ENCODE measurements at regions of chr20 and their contacts with region 1.

Region 1: DNA sequence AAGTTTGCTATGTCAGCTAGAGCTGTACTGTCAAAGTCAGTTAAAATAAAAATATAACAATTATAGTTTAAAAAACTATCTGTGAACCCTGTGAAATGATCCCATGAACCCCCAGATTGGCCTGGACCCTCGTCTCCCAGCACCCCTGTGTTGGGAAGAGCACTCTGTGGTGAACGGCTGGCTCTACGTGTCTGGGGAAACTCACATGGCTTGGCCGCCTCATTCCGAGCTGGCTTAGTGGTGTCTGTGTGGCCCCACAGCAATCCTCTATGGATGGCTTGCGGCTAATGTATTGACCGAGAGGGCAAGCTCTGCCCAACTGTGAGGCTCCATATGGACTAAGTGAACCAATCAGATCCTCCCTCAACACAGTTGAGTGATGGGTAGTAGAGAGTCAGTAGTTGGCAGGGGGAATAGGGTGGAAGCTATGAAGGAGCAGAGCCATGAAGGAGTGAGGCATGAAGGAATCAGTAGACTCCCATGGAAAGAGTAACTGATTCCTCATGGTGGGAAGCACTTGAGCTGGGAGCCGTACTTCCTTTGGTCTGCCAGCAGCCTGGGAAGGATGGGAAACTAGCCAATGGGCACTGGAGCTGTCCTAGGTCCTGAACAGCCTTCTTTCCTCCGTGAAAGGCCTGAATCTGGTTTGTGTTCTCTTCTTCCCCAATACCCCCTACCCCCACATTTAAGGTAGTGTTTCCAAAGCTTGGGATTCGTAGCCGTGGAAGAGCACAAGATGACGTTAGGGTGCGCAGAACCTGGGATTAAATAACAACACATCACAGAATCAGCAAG is 21.6 kb upstream of the ZNF831 start:
- DNase-seq: peak in 2 of 14 experiments; percentile 25 to 33
- ATAC-seq: no peak
- H3K4me3 ChIP-seq: no peak overlapping the region
- H3K4me3 Mint-ChIP-seq: peak overlapping the region; percentile 7
- H3K27ac ChIP-seq: no peak overlapping the region
- H3K27ac Mint-ChIP-seq: no peak overlapping the region
- H3K4me1 ChIP-seq: peaks cover 38% of the 10 kb centered on the region
- H3K4me1 Mint-ChIP-seq: peaks cover 58% of the 10 kb centered on the region
- H3K27me3 ChIP-seq: no peaks in the 10 kb centered on the region
- H3K27me3 Mint-ChIP-seq: no peaks in the 10 kb centered on the region
- CTCF ChIP-seq: no peak

Region 2: GRCh38 chr20:59094576-59094975 is 47.4 kb before region 1 on chr20:
- CTCF ChIA-PET with region 1: no interaction called
- POLR2A ChIA-PET with region 1: interaction called, 3 read pairs
- intact Hi-C with region 1: loop called in 1 of 2 experiments (anchors 5 kb)
- DNase-seq: no peak
- ATAC-seq: no peak
- H3K4me3 ChIP-seq: no peak overlapping the region
- H3K4me3 Mint-ChIP-seq: no peak overlapping the region
- H3K27ac ChIP-seq: no peak overlapping the region
- H3K27ac Mint-ChIP-seq: no peak overlapping the region
- H3K4me1 ChIP-seq: no peaks in the 10 kb centered on the region
- H3K4me1 Mint-ChIP-seq: no peaks in the 10 kb centered on the region
- H3K27me3 ChIP-seq: no peaks in the 10 kb centered on the region
- H3K27me3 Mint-ChIP-seq: no peaks in the 10 kb centered on the region
- CTCF ChIP-seq: no peak

Region 3: DNA sequence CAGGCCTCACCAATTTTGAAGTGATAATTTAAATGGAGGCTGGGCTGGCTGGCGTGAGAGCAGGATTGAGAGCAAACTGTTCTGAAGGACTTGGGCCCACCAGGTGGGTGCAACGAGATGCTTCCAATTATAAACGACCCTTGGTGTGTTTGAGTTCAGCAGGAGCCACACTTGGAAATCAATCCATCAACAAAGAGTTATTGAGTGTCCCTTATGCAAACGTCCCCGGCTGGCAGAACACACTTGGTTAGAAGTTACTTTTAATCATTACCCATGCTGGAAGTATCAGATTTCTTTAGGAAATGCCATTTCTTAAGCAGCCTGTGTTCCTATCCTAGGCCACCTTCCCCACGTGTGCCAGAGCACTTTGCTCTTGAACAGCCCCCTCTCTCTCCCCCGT is 16.1 kb before region 1 on chr20:
- CTCF ChIA-PET with region 1: interaction called, 13 read pairs
- POLR2A ChIA-PET with region 1: interaction called, 203 read pairs
- intact Hi-C with region 1: loop called (anchors 1 to 2 kb)
- DNase-seq: no peak
- ATAC-seq: no peak
- H3K4me3 ChIP-seq: no peak overlapping the region
- H3K4me3 Mint-ChIP-seq: no peak overlapping the region
- H3K27ac ChIP-seq: no peak overlapping the region
- H3K27ac Mint-ChIP-seq: peak overlapping the region; percentile 99
- H3K4me1 ChIP-seq: peaks cover 47% of the 10 kb centered on the region
- H3K4me1 Mint-ChIP-seq: peaks cover 77% of the 10 kb centered on the region
- H3K27me3 ChIP-seq: no peaks in the 10 kb centered on the region
- H3K27me3 Mint-ChIP-seq: no peaks in the 10 kb centered on the region
- CTCF ChIP-seq: no peak

Region 4: GRCh38 chr20:59469267-59470252 is 327.6 kb after region 1 on chr20:
- CTCF ChIA-PET with region 1: no interaction called
- POLR2A ChIA-PET with region 1: no interaction called
- intact Hi-C with region 1: no loop called
- DNase-seq: no peak
- ATAC-seq: no peak
- H3K4me3 ChIP-seq: no peak overlapping the region
- H3K4me3 Mint-ChIP-seq: no peak overlapping the region
- H3K27ac ChIP-seq: no peak overlapping the region
- H3K27ac Mint-ChIP-seq: no peak overlapping the region
- H3K4me1 ChIP-seq: no peaks in the 10 kb centered on the region
- H3K4me1 Mint-ChIP-seq: no peaks in the 10 kb centered on the region
- H3K27me3 ChIP-seq: no peaks in the 10 kb centered on the region
- H3K27me3 Mint-ChIP-seq: peaks cover 6% of the 10 kb centered on the region
- CTCF ChIP-seq: no peak

Measured in CD4-positive, alpha-beta T cell (primary cell).